ENCODE measurements at regions of chr5 and their contacts with region 1.

Region 1: DNA sequence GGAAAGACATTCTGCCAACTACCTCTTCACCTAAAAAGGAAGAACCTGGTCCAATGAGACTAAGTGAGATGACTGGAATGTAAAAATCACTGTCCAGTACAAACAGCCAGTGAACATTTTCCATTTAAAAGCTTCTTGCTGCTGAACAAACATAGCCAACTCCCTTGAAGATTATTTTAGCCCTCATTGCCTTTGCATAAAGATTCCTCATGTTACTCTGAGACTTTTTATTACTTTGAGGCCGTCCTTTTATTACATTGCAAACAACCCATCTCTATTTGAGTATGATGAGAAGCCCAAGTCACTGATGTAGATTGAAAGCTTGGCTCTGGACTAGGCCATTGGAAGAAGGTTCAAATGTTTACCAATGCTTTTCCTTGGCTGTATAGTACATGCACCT is 649.8 kb downstream of the CETN3 start:
- DNase-seq: no peak
- H3K4me3 ChIP-seq: no peak overlapping the region
- H3K27ac ChIP-seq: no peak overlapping the region
- H3K4me1 ChIP-seq: no peaks in the 10 kb centered on the region
- H3K27me3 ChIP-seq: no peaks in the 10 kb centered on the region
- CTCF ChIP-seq: no peak
- POLR2A ChIP-seq: no peak

Region 2: DNA sequence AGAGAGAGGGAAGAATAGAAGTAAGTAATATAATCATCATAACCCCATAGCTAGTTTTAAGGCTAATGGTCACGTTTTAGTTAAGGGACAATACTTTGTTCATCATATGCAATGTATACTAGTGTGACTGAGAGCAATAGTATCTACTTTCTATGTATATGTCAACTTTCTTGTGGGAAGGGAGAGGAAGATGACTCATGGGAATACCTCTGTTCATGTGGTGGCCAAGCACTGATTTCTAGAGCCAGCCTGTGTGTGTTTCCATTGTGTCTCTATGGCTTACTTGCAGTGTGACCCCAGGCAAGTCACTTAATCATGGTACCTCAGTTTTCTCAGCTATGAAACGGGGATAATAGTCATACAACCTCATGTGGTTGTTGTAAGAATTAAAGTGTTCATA is 10.2 kb after region 1 on chr5:
- intact Hi-C with region 1: loop called (anchors 1 kb)
- DNase-seq: no peak
- H3K4me3 ChIP-seq: no peak overlapping the region
- H3K27ac ChIP-seq: no peak overlapping the region
- H3K4me1 ChIP-seq: no peaks in the 10 kb centered on the region
- H3K27me3 ChIP-seq: no peaks in the 10 kb centered on the region
- CTCF ChIP-seq: no peak
- POLR2A ChIP-seq: no peak